Dendritic cell treated with granulocyte-macrophage colony-stimulating factor and Interleukin-4, amounts not matched to agents 40 ng/mL and 50 ng/mL, for 4 days (primary cell): ENCODE measurements at regions of chr6 and their contacts with region 1.

Region 1: DNA sequence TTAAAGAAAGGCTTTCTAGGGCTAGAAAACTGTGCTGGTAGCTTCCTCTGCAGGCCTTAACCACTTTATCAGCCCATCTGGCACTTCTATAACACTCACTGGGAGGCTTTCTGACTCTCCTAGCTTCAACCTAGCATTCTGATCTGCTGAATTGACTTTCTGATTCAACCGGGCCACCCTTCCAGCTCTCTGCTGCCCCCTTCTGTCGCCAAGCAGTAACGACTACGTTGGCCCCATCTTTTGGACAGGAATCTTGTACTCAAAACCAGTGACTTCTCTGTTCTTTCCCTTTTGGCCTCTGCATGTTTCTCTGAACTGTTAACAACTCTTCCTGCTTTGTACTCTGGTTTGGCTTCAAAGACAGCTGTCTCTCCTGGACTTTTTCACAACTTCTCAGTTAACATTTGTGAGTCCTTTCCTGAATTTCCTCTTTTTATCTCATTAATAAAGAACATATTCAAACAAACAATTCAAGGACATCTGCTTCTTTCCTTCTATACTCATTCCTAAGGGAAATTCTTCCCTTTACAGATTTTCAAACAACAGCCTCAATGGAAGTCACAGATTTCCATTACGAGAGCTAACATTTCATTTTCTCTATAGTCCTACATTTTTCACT is 43.9 kb upstream of the FAM135A start:
- H3K4me3 Mint-ChIP-seq: no peak overlapping the region
- H3K27ac Mint-ChIP-seq: no peak overlapping the region
- H3K4me1 Mint-ChIP-seq: peaks cover 5% of the 10 kb centered on the region
- H3K27me3 Mint-ChIP-seq: peaks cover 8% of the 10 kb centered on the region

Region 2: GRCh38 chr6:70045413-70045812 is 324.0 kb before region 1 on chr6:
- intact Hi-C with region 1: no loop called
- H3K4me3 Mint-ChIP-seq: no peak overlapping the region
- H3K27ac Mint-ChIP-seq: no peak overlapping the region
- H3K4me1 Mint-ChIP-seq: no peaks in the 10 kb centered on the region
- H3K27me3 Mint-ChIP-seq: no peaks in the 10 kb centered on the region

Region 3: GRCh38 chr6:70221025-70221714 is 148.3 kb before region 1 on chr6:
- intact Hi-C with region 1: loop called (anchors 2 kb)
- H3K4me3 Mint-ChIP-seq: no peak overlapping the region
- H3K27ac Mint-ChIP-seq: no peak overlapping the region
- H3K4me1 Mint-ChIP-seq: no peaks in the 10 kb centered on the region
- H3K27me3 Mint-ChIP-seq: no peaks in the 10 kb centered on the region

Region 4: DNA sequence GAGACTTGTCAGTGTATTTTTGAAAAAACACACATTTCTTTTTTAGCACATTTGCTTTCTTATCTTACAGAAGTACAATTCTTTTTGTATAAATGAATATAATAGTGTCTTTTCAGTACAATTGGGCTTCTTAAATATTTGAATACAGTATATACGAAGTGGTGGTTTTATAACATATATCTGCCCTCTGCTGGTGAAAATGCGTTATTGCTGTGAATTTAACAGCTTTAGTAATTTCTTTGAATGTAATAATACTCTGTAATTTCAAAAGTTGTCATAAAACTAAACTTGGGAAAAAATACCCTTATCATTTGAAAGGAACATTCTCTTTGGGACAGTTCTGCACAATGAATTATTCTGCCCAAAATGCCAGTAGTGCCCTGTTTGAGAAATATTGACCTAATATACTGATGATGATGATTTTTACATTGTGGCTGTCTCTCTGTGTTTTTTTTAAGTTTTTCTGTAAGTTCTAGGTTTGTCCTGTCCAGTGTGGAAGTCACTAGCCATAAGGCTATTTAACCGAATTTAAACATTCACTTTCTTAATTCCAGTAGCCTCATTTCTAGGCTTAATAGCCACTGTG is 317.2 kb after region 1 on chr6:
- intact Hi-C with region 1: loop called (anchors 10 kb)
- H3K4me3 Mint-ChIP-seq: no peak overlapping the region
- H3K27ac Mint-ChIP-seq: no peak overlapping the region
- H3K4me1 Mint-ChIP-seq: peaks cover 22% of the 10 kb centered on the region
- H3K27me3 Mint-ChIP-seq: no peaks in the 10 kb centered on the region